ENCODE measurements at regions of chrX and their contacts with region 1.

Region 1: DNA sequence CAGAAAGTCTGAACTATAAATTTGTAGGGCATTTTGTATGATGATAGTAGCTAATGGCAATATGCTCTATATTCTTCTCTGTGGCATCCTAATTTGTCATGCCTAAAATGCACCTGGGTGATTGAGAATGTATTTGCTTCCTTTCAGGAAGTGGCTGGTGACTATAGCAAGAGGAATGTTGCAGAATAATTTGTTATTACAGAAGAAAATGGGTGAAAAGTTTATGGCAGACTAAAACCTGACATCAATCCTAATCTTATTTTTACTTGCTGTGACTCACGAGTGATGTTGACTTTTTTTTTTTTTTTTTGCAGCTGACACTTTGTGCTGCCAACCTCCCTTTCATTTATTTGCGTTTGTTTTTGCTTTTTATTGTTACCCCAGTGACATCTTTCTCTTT is 141.1 kb downstream of the MSL3 start:
- DNase-seq: peak; percentile 91
- ATAC-seq: peak; percentile 90
- H3K4me3 ChIP-seq: peak overlapping the region; percentile 28; the same call in 1 of the 2 replicates
- H3K27ac ChIP-seq: peak overlapping the region; percentile 71
- H3K4me1 ChIP-seq: peaks cover 21% of the 10 kb centered on the region
- H3K27me3 ChIP-seq: no peaks in the 10 kb centered on the region
- CTCF ChIP-seq: no peak

Region 2: GRCh38 chrX:11792461-11793421 is 106.3 kb before region 1 on chrX:
- CTCF ChIA-PET with region 1: no interaction called
- POLR2A ChIA-PET with region 1: no interaction called
- intact Hi-C with region 1: loop called (anchors 2 kb)
- DNase-seq: peak; percentile 4
- ATAC-seq: no peak; the same call in 1 of the 2 replicates
- H3K4me3 ChIP-seq: no peak overlapping the region
- H3K27ac ChIP-seq: peak overlapping the region; percentile 47
- H3K4me1 ChIP-seq: peaks cover 13% of the 10 kb centered on the region
- H3K27me3 ChIP-seq: no peaks in the 10 kb centered on the region
- CTCF ChIP-seq: no peak